T-cell (primary cell): ENCODE measurements at regions of chr1 and their contacts with region 1.

Region 1: GRCh38 chr1:145978854-145979759 is 14.6 kb downstream of the POLR3GL start:
- DNase-seq: peak in 33 of 35 experiments; percentile 53 to 91 (median 75)
- ATAC-seq: peak; percentile 74 to 81 (median 76)
- H3K4me3 ChIP-seq: peak overlapping the region; percentile 20 to 33
- H3K4me3 Mint-ChIP-seq: no peak overlapping the region
- H3K27ac ChIP-seq: peak overlapping the region; percentile 94
- H3K27ac Mint-ChIP-seq: no peak overlapping the region
- H3K4me1 ChIP-seq: peaks cover 60 to 68% of the 10 kb centered on the region in 2 experiments
- H3K4me1 Mint-ChIP-seq: peaks cover 1 to 42% (median 10%) of the 10 kb centered on the region in 3 donors
- H3K27me3 ChIP-seq: no peaks in the 10 kb centered on the region
- H3K27me3 Mint-ChIP-seq: no peaks in the 10 kb centered on the region

Region 2: DNA sequence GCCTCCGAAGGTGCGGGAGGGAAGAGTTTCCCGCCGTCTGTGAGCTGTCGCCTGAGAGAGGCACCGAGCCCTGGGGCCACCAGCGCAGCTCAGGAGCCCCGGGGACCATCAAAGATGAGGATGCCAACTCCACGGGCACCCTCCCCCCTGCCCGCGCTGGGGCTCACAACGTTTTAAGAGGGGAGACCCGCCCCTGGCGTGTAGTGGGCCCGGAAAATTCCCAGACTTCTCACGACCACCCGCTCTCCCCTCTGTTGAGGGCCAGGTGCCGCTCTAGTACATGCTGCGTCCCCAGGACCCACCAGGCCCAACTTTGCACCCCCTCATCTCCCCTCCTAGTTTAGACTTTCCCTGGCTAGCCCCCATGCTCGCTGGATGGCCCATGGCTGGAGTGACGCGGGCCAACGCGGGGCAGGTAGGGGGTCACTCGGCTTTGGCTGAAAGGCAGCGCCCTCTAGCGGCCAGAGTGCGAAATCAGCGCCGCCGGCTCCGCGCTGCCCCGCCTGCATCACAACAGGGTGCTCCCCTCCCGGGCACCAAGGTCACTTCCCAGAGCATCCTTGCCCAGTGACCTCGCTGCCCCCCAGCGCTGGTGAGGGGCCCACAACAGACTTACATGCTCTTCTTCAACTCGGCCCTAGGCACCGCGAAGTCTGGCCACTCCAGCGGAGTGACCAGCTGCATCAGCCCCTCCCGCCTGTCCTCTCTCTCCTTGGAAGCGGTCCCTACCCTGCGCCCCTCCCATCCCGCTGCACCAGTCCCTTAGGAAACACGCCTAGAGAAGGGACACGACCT is 258.0 kb before region 1 on chr1:
- CTCF ChIA-PET with region 1: no interaction called
- POLR2A ChIA-PET with region 1: no interaction called
- DNase-seq: peak; percentile 10 to 79 (median 60)
- ATAC-seq: peak; percentile 82 to 87 (median 86)
- H3K4me3 ChIP-seq: peak overlapping the region; percentile 47 to 49
- H3K4me3 Mint-ChIP-seq: peak overlapping the region; percentile 60 to 75 (median 65)
- H3K27ac ChIP-seq: no peak overlapping the region
- H3K27ac Mint-ChIP-seq: peak overlapping the region in 1 of 2 donors; percentile 49
- H3K4me1 ChIP-seq: peaks cover 0 to 49% of the 10 kb centered on the region in 2 experiments
- H3K4me1 Mint-ChIP-seq: peaks cover 10 to 30% (median 25%) of the 10 kb centered on the region in 3 donors
- H3K27me3 ChIP-seq: peaks cover 0 to 16% of the 10 kb centered on the region in 2 experiments
- H3K27me3 Mint-ChIP-seq: peaks cover 12 to 18% of the 10 kb centered on the region in 2 donors

Region 3: GRCh38 chr1:145858894-145859490 is 120.1 kb before region 1 on chr1 and contains the start of gene PIAS3:
- CTCF ChIA-PET with region 1: interaction called, 8 to 10 read pairs
- POLR2A ChIA-PET with region 1: no interaction called
- DNase-seq: peak; percentile 56 to 85 (median 73)
- ATAC-seq: peak; percentile 86 to 89 (median 87)
- H3K4me3 ChIP-seq: peak within 1 kb of the TSS; percentile 93 to 96
- H3K4me3 Mint-ChIP-seq: peak within 1 kb of the TSS; percentile 92 to 96 (median 94)
- H3K27ac ChIP-seq: peak within 1 kb of the TSS; percentile 63
- H3K27ac Mint-ChIP-seq: peak within 1 kb of the TSS; percentile 84 to 90
- H3K4me1 ChIP-seq: peaks cover 2 to 21% of the 10 kb centered on the region in 2 experiments
- H3K4me1 Mint-ChIP-seq: peaks cover 12 to 19% (median 18%) of the 10 kb centered on the region in 3 donors
- H3K27me3 ChIP-seq: no peaks in the 10 kb centered on the region
- H3K27me3 Mint-ChIP-seq: no peaks in the 10 kb centered on the region
- total RNA-seq, gene PIAS3: 22.1 to 28.3 (median 26.8) TPM

Region 4: GRCh38 chr1:145963995-145964901 is 14.9 kb before region 1 on chr1 and contains the starts of genes ANKRD34A and POLR3GL:
- CTCF ChIA-PET with region 1: interaction called, 6 to 13 read pairs
- POLR2A ChIA-PET with region 1: interaction called, 5 to 8 read pairs
- DNase-seq: peak; percentile 80 to 98 (median 92)
- ATAC-seq: peak; percentile 90 to 91 (median 90)
- H3K4me3 ChIP-seq: peak within 1 kb of the TSS; percentile 78 to 89
- H3K4me3 Mint-ChIP-seq: peak within 1 kb of the TSS; percentile 88 to 95 (median 92)
- H3K27ac ChIP-seq: peak within 1 kb of the TSS; percentile 70
- H3K27ac Mint-ChIP-seq: peak within 1 kb of the TSS; percentile 94 to 99
- H3K4me1 ChIP-seq: peaks cover 32 to 54% of the 10 kb centered on the region in 2 experiments
- H3K4me1 Mint-ChIP-seq: peaks cover 54 to 72% (median 68%) of the 10 kb centered on the region in 3 donors
- H3K27me3 ChIP-seq: no peaks in the 10 kb centered on the region
- H3K27me3 Mint-ChIP-seq: no peaks in the 10 kb centered on the region
- total RNA-seq, gene ANKRD34A: 0.68 to 3.5 (median 1.7) TPM
- total RNA-seq, gene POLR3GL: 30.9 to 41.7 (median 38.3) TPM

Region 5: GRCh38 chr1:146007506-146008133 is 28.5 kb after region 1 on chr1:
- CTCF ChIA-PET with region 1: interaction called, 46 to 148 read pairs
- POLR2A ChIA-PET with region 1: interaction called, 4 to 15 read pairs
- DNase-seq: no peak
- ATAC-seq: no peak
- H3K4me3 ChIP-seq: no peak overlapping the region
- H3K4me3 Mint-ChIP-seq: peak overlapping the region in 1 of 3 donors; percentile 68
- H3K27ac ChIP-seq: peak overlapping the region; percentile 81
- H3K27ac Mint-ChIP-seq: peak overlapping the region; percentile 83 to 87
- H3K4me1 ChIP-seq: peaks cover 14 to 42% of the 10 kb centered on the region in 2 experiments
- H3K4me1 Mint-ChIP-seq: peaks cover 40 to 54% (median 43%) of the 10 kb centered on the region in 3 donors
- H3K27me3 ChIP-seq: no peaks in the 10 kb centered on the region
- H3K27me3 Mint-ChIP-seq: no peaks in the 10 kb centered on the region

Region 6: GRCh38 chr1:146019231-146020057 is 40.3 kb after region 1 on chr1:
- CTCF ChIA-PET with region 1: interaction called in 1 of 2 experiments, 18 read pairs
- POLR2A ChIA-PET with region 1: interaction called in 1 of 2 experiments, 3 read pairs
- DNase-seq: peak in 1 of 35 experiments; percentile 10
- ATAC-seq: peak; percentile 44 to 52 (median 45)
- H3K4me3 ChIP-seq: no peak overlapping the region
- H3K4me3 Mint-ChIP-seq: peak overlapping the region in 1 of 3 donors; percentile 39
- H3K27ac ChIP-seq: no peak overlapping the region
- H3K27ac Mint-ChIP-seq: peak overlapping the region in 1 of 2 donors; percentile 2
- H3K4me1 ChIP-seq: peaks cover 0 to 11% of the 10 kb centered on the region in 2 experiments
- H3K4me1 Mint-ChIP-seq: peaks cover 5 to 11% (median 6%) of the 10 kb centered on the region in 3 donors
- H3K27me3 ChIP-seq: peaks cover 2 to 36% of the 10 kb centered on the region in 2 experiments
- H3K27me3 Mint-ChIP-seq: peaks cover 39 to 49% of the 10 kb centered on the region in 2 donors